Activated CD4-positive, alpha-beta memory T cell treated with anti-CD3 and anti-CD28 coated beads, Interleukin-2, amount 10 ng/mL, durations not matched to agents 7 days and 5 days (primary cell): ENCODE measurements at regions of chr22 and their contacts with region 1.

Region 1: DNA sequence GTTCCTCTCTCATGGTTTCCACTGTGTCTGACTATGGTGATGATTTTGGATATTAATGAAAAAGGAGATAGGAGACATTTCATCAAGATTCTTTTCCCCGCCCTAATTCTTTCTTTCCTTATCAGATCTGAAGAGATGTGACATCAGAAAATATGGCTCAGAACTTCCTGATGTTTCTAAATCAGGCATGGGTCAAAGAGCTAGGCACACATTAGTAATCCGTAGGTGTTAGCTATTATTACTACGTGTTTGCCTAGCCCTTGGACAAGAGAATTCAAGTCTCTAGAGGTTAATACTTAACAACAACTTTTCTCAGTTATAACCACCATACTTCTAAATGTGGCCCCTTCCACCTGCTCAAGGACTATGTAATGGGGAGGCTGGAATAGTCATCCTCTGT is 5.8 kb downstream of the JOSD1 start:
- DNase-seq: no peak
- H3K4me3 Mint-ChIP-seq: no peak overlapping the region
- H3K27ac Mint-ChIP-seq: no peak overlapping the region
- H3K4me1 Mint-ChIP-seq: peaks cover 70% of the 10 kb centered on the region
- H3K27me3 Mint-ChIP-seq: no peaks in the 10 kb centered on the region

Region 2: GRCh38 chr22:38638734-38639133 is 56.2 kb before region 1 on chr22:
- CTCF ChIA-PET with region 1: no interaction called
- POLR2A ChIA-PET with region 1: no interaction called
- DNase-seq: no peak
- H3K4me3 Mint-ChIP-seq: no peak overlapping the region
- H3K27ac Mint-ChIP-seq: no peak overlapping the region
- H3K4me1 Mint-ChIP-seq: no peaks in the 10 kb centered on the region
- H3K27me3 Mint-ChIP-seq: peaks cover 9% of the 10 kb centered on the region

Region 3: GRCh38 chr22:38681784-38682335 is 13.1 kb before region 1 on chr22 and contains the start of gene TOMM22:
- CTCF ChIA-PET with region 1: interaction called, 17 read pairs
- POLR2A ChIA-PET with region 1: interaction called, 139 read pairs
- DNase-seq: peak; percentile 85
- H3K4me3 Mint-ChIP-seq: peak within 1 kb of the TSS; percentile 100
- H3K27ac Mint-ChIP-seq: peak within 1 kb of the TSS; percentile 95
- H3K4me1 Mint-ChIP-seq: peaks cover 25% of the 10 kb centered on the region
- H3K27me3 Mint-ChIP-seq: no peaks in the 10 kb centered on the region
- total RNA-seq, gene TOMM22: 60.4 to 63.0 TPM